Heart left ventricle (tissue), 16 donors: ENCODE measurements at regions of chr7 and their contacts with region 1.

Region 1: GRCh38 chr7:152463709-152464311 is 28.0 kb upstream of the KMT2C start:
- DNase-seq: peak; percentile 100
- ATAC-seq: peak; percentile 95 to 99 (median 98)
- H3K4me3 ChIP-seq: peak overlapping the region; percentile 91 to 99 (median 96)
- H3K27ac ChIP-seq: peak overlapping the region; percentile 99 to 100 (median 100)
- H3K4me1 ChIP-seq: peaks cover 0 to 33% (median 7%) of the 10 kb centered on the region in 12 donors
- H3K27me3 ChIP-seq: no peaks in the 10 kb centered on the region
- CTCF ChIP-seq: no peak
- POLR2A ChIP-seq: peak in 1 of 2 donors; percentile 87

Region 2: DNA sequence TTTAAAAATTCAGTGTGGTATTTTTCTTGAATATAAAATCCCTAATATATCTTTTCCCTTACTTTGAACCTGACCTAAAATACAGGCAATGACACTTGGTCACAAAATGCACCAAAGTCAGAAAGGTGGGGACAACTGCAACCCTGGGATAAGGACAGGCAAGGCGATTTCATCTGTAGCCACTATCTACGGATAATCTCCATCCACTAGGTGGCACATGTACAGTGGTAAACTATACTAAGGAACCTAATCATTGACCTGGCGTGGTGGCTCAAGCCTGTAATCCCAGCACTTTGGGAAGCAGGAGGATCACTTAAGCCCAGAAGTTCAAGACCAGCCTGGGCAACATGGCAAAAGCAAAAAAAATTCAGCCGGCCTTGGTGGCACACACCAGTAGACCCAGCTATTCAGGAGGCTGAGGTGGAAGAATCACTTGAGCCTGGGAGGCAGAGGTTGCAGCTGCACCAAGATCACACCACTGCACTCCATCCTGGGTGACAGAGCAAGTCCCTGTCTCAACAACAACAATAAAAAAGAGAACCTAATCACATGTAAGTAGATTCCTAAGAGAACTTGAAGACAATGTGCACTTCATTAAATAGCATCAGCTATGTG is 126.9 kb before region 1 on chr7:
- intact Hi-C with region 1: loop called in 6 of 10 experiments (anchors 5 to 10 kb)
- DNase-seq: no peak
- ATAC-seq: peak in 3 of 4 donors; percentile 64 to 71 (median 70)
- H3K4me3 ChIP-seq: peak overlapping the region in 2 of 12 donors; percentile 38 to 44
- H3K27ac ChIP-seq: peak overlapping the region in 2 of 12 donors; percentile 41 to 61
- H3K4me1 ChIP-seq: peaks cover 4 to 69% (median 46%) of the 10 kb centered on the region in 12 donors
- H3K27me3 ChIP-seq: no peaks in the 10 kb centered on the region
- CTCF ChIP-seq: peak in 11 of 12 donors; percentile 37 to 58 (median 47)
- POLR2A ChIP-seq: no peak

Region 3: GRCh38 chr7:152366662-152367061 is 97.1 kb before region 1 on chr7:
- intact Hi-C with region 1: loop called in 1 of 10 experiments (anchors 10 kb)
- DNase-seq: peak in 2 of 5 donors; percentile 30 to 58
- ATAC-seq: peak; percentile 32 to 84 (median 72)
- H3K4me3 ChIP-seq: peak overlapping the region in 2 of 12 donors; percentile 7 to 30
- H3K27ac ChIP-seq: peak overlapping the region in 1 of 12 donors; percentile 31
- H3K4me1 ChIP-seq: peaks cover 0 to 69% (median 41%) of the 10 kb centered on the region in 12 donors
- H3K27me3 ChIP-seq: no peaks in the 10 kb centered on the region
- CTCF ChIP-seq: no peak
- POLR2A ChIP-seq: no peak

Region 4: DNA sequence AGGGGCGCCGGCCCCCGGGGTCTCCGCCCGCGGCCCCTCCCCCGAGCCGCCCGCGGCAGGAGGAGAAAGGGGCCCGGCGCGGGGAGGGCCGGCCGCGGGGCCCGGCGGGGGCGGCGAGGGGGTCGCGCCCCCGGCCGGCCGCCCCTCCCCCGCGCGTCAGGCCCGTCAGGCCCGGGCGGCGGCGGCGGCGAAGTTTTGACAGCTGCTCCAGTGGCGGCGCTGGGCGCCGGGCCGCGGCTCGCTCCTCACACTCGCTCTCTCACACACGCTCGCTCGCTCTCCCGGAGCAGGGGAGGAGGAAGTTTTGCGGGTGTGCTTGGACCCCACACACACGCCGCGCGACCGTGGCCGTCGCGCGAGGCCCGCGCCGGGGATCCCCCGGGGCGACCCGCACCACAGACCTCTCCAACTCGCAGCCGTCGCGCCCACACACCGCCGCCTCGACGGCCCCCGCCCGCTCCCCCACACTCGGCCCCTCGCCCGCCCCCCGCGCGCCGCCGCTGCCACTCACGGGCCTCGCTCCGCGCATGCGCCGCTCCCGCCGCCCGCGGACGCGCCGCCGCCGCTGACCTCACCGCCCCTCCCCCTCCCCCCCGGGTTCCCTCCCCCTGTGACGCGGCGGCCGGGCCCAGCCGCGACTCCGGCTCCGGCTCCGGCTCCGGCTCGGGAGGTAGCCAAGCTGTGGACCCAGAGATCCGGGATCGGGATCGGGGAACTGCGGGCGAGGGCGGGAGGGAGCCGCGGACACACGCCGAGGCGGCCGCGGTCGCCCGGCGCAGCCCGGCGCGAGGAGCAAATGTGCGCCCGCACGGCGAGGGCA is 27.5 kb before region 1 on chr7:
- intact Hi-C with region 1: loop called in 4 of 10 experiments (anchors 1 to 2 kb)
- DNase-seq: peak; percentile 95 to 96 (median 95)
- ATAC-seq: peak; percentile 83 to 93 (median 90)
- H3K4me3 ChIP-seq: peak overlapping the region; percentile 39 to 98 (median 76)
- H3K27ac ChIP-seq: peak overlapping the region; percentile 92 to 100 (median 97)
- H3K4me1 ChIP-seq: peaks cover 0 to 30% (median 24%) of the 10 kb centered on the region in 12 donors
- H3K27me3 ChIP-seq: no peaks in the 10 kb centered on the region
- CTCF ChIP-seq: no peak
- POLR2A ChIP-seq: peak in 1 of 2 donors; percentile 56

Region 5: DNA sequence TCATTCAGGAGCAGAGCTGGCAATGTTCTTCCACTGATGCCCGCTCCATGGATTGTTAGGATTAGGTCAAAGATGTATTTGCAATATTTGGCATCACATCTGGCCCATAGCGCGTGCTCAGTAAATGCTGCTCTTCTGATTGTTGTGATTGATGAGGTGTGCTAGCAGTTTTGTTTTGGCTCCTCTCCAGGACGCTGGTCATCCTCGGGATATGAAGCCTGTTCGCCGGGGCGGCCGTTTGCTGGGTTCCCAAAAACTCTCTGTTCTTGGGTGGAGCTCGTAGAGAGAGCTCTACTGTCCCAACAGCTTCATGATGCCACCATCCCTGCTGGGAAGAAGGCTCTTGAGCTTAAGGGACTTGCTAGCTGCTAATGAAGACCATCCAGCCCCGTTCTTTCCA is 115.3 kb after region 1 on chr7:
- intact Hi-C with region 1: no loop called
- DNase-seq: no peak
- ATAC-seq: no peak
- H3K4me3 ChIP-seq: no peak overlapping the region
- H3K27ac ChIP-seq: no peak overlapping the region
- H3K4me1 ChIP-seq: no peaks in the 10 kb centered on the region
- H3K27me3 ChIP-seq: no peaks in the 10 kb centered on the region
- CTCF ChIP-seq: no peak
- POLR2A ChIP-seq: no peak

Region 6: GRCh38 chr7:152615031-152615741 is 151.4 kb after region 1 on chr7:
- intact Hi-C with region 1: no loop called
- DNase-seq: no peak
- ATAC-seq: peak; percentile 51 to 72 (median 70)
- H3K4me3 ChIP-seq: peak overlapping the region in 3 of 12 donors; percentile 12 to 15 (median 13)
- H3K27ac ChIP-seq: no peak overlapping the region
- H3K4me1 ChIP-seq: peaks cover 0 to 4% (median 0%) of the 10 kb centered on the region in 12 donors
- H3K27me3 ChIP-seq: no peaks in the 10 kb centered on the region
- CTCF ChIP-seq: no peak
- POLR2A ChIP-seq: no peak